CD4-positive, alpha-beta T cell (primary cell): ENCODE measurements at regions of chr14 and their contacts with region 1.

Region 1: GRCh38 chr14:100108042-100108825 is 43.0 kb downstream of the EVL start:
- DNase-seq: peak; percentile 80 to 92 (median 86)
- ATAC-seq: peak; percentile 45
- H3K4me3 ChIP-seq: no peak overlapping the region
- H3K4me3 Mint-ChIP-seq: peak overlapping the region; percentile 69
- H3K27ac ChIP-seq: peak overlapping the region; percentile 49 to 85
- H3K27ac Mint-ChIP-seq: peak overlapping the region; percentile 98
- H3K4me1 ChIP-seq: peaks cover 87% of the 10 kb centered on the region
- H3K4me1 Mint-ChIP-seq: peaks cover 80% of the 10 kb centered on the region
- H3K27me3 ChIP-seq: no peaks in the 10 kb centered on the region
- H3K27me3 Mint-ChIP-seq: no peaks in the 10 kb centered on the region
- CTCF ChIP-seq: peak; percentile 93

Region 2: DNA sequence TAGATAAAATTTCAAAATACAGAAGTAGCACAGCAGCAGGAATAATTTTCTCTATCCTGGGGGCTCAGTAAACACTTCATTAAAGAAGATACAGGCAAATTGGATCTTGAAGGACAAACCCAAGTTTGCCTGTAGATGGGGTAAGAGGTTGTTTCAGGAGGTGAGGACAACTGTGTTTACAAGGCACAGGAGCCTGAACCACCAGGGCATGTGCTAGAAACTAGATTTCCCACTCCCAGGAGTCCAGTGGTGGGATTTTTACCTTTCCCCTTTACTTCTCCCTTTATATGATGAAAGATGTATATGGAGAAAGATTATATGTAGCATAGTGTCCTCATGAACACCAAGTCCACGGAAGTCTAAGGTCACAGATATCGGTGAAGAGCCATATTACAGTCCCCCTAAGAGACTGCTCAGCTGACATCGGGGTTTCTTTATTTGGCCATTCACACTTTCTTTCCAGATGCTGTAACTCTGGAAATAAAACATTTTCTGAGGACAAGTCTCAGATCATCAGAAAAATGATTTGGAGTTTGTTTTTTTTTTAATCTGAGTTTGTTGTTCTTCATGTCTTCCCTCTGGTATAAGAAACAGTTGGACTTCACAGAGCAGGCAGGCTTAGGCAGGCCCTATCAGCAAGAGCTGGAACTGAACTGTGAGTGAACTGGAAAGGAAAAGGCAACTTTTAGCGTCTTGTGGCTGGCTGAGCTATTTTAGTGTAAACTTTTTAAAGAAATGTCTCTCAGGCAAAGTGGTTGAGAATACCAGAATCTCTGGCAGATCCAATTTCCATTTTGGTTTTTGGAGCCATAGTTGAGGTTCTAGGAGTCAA is 51.1 kb before region 1 on chr14:
- CTCF ChIA-PET with region 1: interaction called, 1,090 read pairs
- POLR2A ChIA-PET with region 1: interaction called, 1,638 read pairs
- intact Hi-C with region 1: loop called (anchors 1 kb)
- DNase-seq: peak in 4 of 14 experiments; percentile 48 to 85 (median 78)
- ATAC-seq: peak; percentile 80
- H3K4me3 ChIP-seq: no peak overlapping the region
- H3K4me3 Mint-ChIP-seq: peak overlapping the region; percentile 8
- H3K27ac ChIP-seq: peak overlapping the region in 1 of 2 donors; percentile 39
- H3K27ac Mint-ChIP-seq: peak overlapping the region; percentile 78
- H3K4me1 ChIP-seq: peaks cover 48% of the 10 kb centered on the region
- H3K4me1 Mint-ChIP-seq: peaks cover 51% of the 10 kb centered on the region
- H3K27me3 ChIP-seq: no peaks in the 10 kb centered on the region
- H3K27me3 Mint-ChIP-seq: no peaks in the 10 kb centered on the region
- CTCF ChIP-seq: peak; percentile 81

Region 3: DNA sequence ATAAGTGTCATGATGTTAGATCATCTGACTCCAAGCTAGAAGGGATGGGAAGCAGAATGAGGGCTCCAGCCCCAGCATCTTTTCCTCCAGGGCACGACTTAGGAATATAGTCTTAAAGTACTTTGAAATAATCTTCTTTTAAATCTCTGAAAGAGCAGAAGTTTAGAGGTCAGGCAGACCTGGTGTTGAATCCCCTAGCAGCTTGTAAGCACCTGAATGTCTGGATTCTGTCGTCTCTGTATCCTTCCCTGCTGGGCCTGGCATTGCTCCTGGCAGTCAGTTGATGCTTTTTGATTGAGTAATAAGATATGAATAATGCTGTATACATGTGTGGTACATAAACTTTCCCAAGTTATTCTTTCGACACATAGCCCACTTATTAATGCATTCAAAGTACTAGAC is 11.7 kb before region 1 on chr14:
- CTCF ChIA-PET with region 1: interaction called, 1,090 read pairs
- POLR2A ChIA-PET with region 1: interaction called, 11 read pairs
- intact Hi-C with region 1: no loop called
- DNase-seq: no peak
- ATAC-seq: no peak
- H3K4me3 ChIP-seq: no peak overlapping the region
- H3K4me3 Mint-ChIP-seq: peak overlapping the region; percentile 56
- H3K27ac ChIP-seq: peak overlapping the region; percentile 28 to 43
- H3K27ac Mint-ChIP-seq: peak overlapping the region; percentile 98
- H3K4me1 ChIP-seq: peaks cover 96% of the 10 kb centered on the region
- H3K4me1 Mint-ChIP-seq: peaks cover 98% of the 10 kb centered on the region
- H3K27me3 ChIP-seq: no peaks in the 10 kb centered on the region
- H3K27me3 Mint-ChIP-seq: no peaks in the 10 kb centered on the region
- CTCF ChIP-seq: no peak